ENCODE measurements at regions of chr6 and their contacts with region 1.

Region 1: DNA sequence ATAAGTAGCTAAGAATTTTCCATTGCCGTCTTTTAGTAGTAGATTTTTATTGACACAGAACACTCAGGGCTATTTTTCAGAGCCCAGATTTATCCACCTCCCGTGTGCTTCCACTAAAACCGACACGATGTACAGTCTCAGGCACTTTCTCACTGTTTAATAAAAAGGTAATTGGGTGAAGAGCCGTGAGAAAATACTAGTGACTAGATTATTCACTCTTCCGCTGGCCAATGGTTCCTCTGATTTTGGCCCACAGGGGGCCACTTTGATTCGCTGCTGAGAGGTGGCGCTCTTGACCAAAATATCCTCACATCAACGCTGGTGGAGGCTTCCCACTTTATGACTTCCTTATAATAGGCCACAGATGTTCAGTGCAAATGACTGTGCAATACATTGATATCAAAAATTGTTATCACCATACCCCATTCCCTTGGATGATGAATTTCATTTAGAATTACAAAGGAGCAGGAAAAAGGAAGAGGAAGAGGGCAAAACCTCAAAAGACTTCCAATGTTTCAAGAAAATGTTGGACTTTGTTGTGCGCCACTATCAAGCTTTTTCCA is 12.3 kb upstream of the HDDC2 start:
- DNase-seq: peak; percentile 73
- H3K4me3 Mint-ChIP-seq: no peak overlapping the region
- H3K27ac Mint-ChIP-seq: no peak overlapping the region
- H3K4me1 Mint-ChIP-seq: no peaks in the 10 kb centered on the region
- H3K27me3 Mint-ChIP-seq: peaks cover 12% of the 10 kb centered on the region
- CTCF ChIP-seq: peak; percentile 79

Region 2: GRCh38 chr6:125377621-125378020 is 63.5 kb after region 1 on chr6:
- CTCF ChIA-PET with region 1: no interaction called
- POLR2A ChIA-PET with region 1: no interaction called
- intact Hi-C with region 1: no loop called
- DNase-seq: peak; percentile 21
- H3K4me3 Mint-ChIP-seq: no peak overlapping the region
- H3K27ac Mint-ChIP-seq: no peak overlapping the region
- H3K4me1 Mint-ChIP-seq: no peaks in the 10 kb centered on the region
- H3K27me3 Mint-ChIP-seq: peaks cover 100% of the 10 kb centered on the region
- CTCF ChIP-seq: no peak

Region 3: GRCh38 chr6:125749173-125749864 is 435.2 kb after region 1 on chr6 and contains the start of gene HEY2:
- CTCF ChIA-PET with region 1: interaction called, 233 read pairs
- POLR2A ChIA-PET with region 1: interaction called, 3 read pairs
- intact Hi-C with region 1: loop called (anchors 1 kb)
- DNase-seq: peak; percentile 88
- H3K4me3 Mint-ChIP-seq: peak within 1 kb of the TSS; percentile 73
- H3K27ac Mint-ChIP-seq: no peak within 1 kb of the TSS
- H3K4me1 Mint-ChIP-seq: peaks cover 9% of the 10 kb centered on the region
- H3K27me3 Mint-ChIP-seq: peaks cover 97% of the 10 kb centered on the region
- CTCF ChIP-seq: no peak
- total RNA-seq, gene HEY2: not detected in 2 replicates

Region 4: DNA sequence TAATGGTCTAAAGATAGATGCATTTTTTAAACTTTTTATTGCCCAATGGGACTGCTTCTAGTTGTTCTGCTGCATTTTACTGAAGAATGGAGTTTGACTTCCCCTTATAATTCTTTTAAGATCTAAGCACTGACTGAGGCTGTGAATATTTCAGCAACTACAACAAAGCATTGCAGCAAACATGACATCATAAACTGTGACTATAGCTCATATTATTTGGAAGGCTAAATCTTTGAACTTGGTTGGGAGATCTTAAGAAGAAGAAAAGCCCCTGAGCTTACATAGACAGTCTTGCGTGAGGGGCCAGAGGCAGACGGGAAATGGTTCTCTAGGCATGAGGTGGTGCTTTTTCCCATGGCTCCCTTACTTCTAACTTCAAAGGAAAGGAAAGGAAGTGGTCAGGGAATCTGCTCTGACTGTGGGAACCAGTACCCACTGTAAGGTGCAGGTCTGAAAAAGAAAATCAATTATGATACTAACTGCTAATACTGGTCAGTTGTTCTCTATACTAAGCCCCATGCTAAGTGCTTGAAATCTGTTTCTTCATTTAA is 450.1 kb after region 1 on chr6:
- CTCF ChIA-PET with region 1: interaction called, 233 read pairs
- POLR2A ChIA-PET with region 1: no interaction called
- intact Hi-C with region 1: loop called (anchors 1 kb)
- DNase-seq: no peak
- H3K4me3 Mint-ChIP-seq: no peak overlapping the region
- H3K27ac Mint-ChIP-seq: no peak overlapping the region
- H3K4me1 Mint-ChIP-seq: no peaks in the 10 kb centered on the region
- H3K27me3 Mint-ChIP-seq: peaks cover 94% of the 10 kb centered on the region
- CTCF ChIP-seq: no peak

Region 5: GRCh38 chr6:125769147-125769783 is 455.2 kb after region 1 on chr6:
- CTCF ChIA-PET with region 1: interaction called, 145 read pairs
- POLR2A ChIA-PET with region 1: no interaction called
- intact Hi-C with region 1: loop called (anchors 1 kb)
- DNase-seq: no peak
- H3K4me3 Mint-ChIP-seq: no peak overlapping the region
- H3K27ac Mint-ChIP-seq: no peak overlapping the region
- H3K4me1 Mint-ChIP-seq: no peaks in the 10 kb centered on the region
- H3K27me3 Mint-ChIP-seq: peaks cover 51% of the 10 kb centered on the region
- CTCF ChIP-seq: no peak

Region 6: DNA sequence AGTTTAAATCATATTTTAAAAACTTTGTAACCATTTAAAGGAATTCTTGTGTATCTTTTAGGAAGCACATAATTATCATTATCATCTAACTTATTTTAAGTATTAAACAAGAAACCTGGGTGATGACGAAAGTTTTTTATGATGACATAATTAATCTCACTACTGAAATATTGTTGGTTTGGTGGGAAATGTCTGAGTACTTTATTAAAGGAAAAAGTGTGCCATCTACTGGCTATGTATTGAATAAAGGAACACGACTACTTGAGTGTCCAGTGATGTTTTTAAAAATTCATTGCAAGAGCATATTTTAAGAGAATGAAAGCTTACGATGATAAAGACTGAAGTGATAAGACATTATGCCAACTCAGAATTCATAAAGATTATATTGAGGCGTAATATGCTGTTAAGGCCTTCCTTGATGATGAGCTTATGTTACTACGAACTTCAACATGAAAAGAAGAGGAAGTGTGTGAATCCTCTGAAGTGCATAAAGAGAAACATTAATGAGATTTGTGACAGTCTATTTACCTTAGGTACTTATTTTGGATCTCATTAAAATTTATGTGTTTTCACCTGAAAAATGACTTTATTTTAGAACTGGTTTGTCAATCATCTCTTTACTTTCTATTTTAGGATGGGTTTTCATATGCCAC is 660.2 kb after region 1 on chr6:
- CTCF ChIA-PET with region 1: interaction called, 17 read pairs
- POLR2A ChIA-PET with region 1: no interaction called
- intact Hi-C with region 1: loop called (anchors 1 kb)
- DNase-seq: peak; percentile 66
- H3K4me3 Mint-ChIP-seq: no peak overlapping the region
- H3K27ac Mint-ChIP-seq: no peak overlapping the region
- H3K4me1 Mint-ChIP-seq: peaks cover 5% of the 10 kb centered on the region
- H3K27me3 Mint-ChIP-seq: no peaks in the 10 kb centered on the region
- CTCF ChIP-seq: peak; percentile 44

Measured in MCF 10A (cell line).